Prostate gland (tissue), 2 donors: ENCODE measurements at regions of chr12 and their contacts with region 1.

Region 1: GRCh38 chr12:93766796-93767523 is 89.8 kb downstream of the CRADD start:
- DNase-seq: peak; percentile 54
- H3K4me3 ChIP-seq: no peak overlapping the region
- H3K27ac ChIP-seq: peak overlapping the region; percentile 54 to 60
- H3K4me1 ChIP-seq: no peaks in the 10 kb centered on the region
- H3K27me3 ChIP-seq: no peaks in the 10 kb centered on the region
- CTCF ChIP-seq: peak in 3 of 4 experiments; percentile 54 to 80 (median 70)
- POLR2A ChIP-seq: no peak

Region 2: GRCh38 chr12:93979189-93979588 is 212.2 kb after region 1 on chr12:
- intact Hi-C with region 1: loop called (anchors 10 kb)
- DNase-seq: peak; percentile 29
- H3K4me3 ChIP-seq: no peak overlapping the region
- H3K27ac ChIP-seq: no peak overlapping the region
- H3K4me1 ChIP-seq: no peaks in the 10 kb centered on the region
- H3K27me3 ChIP-seq: no peaks in the 10 kb centered on the region
- CTCF ChIP-seq: peak in 3 of 4 experiments; percentile 46 to 74 (median 48)
- POLR2A ChIP-seq: no peak

Region 3: GRCh38 chr12:94074980-94075928 is 308.3 kb after region 1 on chr12:
- intact Hi-C with region 1: loop called (anchors 5 kb)
- DNase-seq: peak; percentile 49
- H3K4me3 ChIP-seq: no peak overlapping the region
- H3K27ac ChIP-seq: peak overlapping the region; percentile 11 to 45
- H3K4me1 ChIP-seq: no peaks in the 10 kb centered on the region
- H3K27me3 ChIP-seq: no peaks in the 10 kb centered on the region
- CTCF ChIP-seq: peak in 3 of 4 experiments; percentile 46 to 57 (median 57)
- POLR2A ChIP-seq: no peak

Region 4: GRCh38 chr12:94101738-94102660 is 335.0 kb after region 1 on chr12:
- intact Hi-C with region 1: loop called (anchors 2 kb)
- DNase-seq: peak; percentile 86
- H3K4me3 ChIP-seq: peak overlapping the region; percentile 35 to 59
- H3K27ac ChIP-seq: peak overlapping the region; percentile 49 to 72
- H3K4me1 ChIP-seq: peaks cover 3% of the 10 kb centered on the region
- H3K27me3 ChIP-seq: no peaks in the 10 kb centered on the region
- CTCF ChIP-seq: peak; percentile 60 to 91 (median 86)
- POLR2A ChIP-seq: peak; percentile 12